Naive thymus-derived CD4-positive, alpha-beta T cell (primary cell): ENCODE measurements at regions of chr10 and their contacts with region 1.

Region 1: DNA sequence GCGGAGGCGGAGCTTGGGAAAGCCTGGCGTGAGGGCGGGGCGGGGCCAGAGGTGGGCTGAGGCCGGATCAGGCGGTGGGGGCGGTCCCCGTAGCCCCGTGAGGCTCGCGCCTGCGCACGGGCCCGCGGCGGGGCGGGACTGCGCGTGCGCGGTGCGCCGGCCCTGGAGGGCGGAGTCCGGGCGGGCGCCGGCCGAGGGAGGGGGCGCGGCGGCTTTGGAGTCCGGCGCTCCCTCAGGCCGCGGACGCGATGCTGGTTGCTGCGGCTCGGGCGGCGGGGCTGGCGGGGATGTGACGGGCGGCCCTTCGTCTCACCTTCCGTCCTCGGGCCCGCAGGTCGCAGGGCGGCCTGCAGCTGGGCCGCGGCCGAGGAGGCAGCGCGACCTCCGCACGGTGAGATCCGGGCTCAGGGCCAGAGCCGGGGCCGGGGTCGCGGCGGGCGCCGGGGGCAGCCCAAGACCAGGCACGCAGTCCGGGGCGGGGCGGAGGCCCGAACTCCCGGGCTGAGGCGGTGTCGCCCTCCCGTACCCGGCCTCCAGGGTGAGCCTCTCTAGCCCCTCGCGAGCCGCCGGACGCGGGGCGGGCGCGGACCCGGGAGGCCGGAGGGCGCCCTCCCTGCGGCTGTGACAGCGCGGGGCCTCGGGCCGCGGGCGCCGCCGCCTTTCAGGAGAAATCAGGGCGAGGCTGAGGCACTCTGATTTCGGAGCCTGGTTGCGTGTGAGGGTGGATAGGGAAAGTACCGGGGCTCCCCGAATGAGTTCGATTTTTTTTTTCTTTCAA is at the start of gene CCSER2:
- DNase-seq: peak; percentile 83 to 99 (median 88)
- ATAC-seq: peak; percentile 83
- H3K4me3 ChIP-seq: peak within 1 kb of the TSS; percentile 74
- H3K4me3 Mint-ChIP-seq: peak within 1 kb of the TSS; percentile 91 to 99 (median 94)
- H3K27ac ChIP-seq: peak within 1 kb of the TSS; percentile 100
- H3K27ac Mint-ChIP-seq: peak within 1 kb of the TSS; percentile 92 to 99 (median 97)
- H3K4me1 ChIP-seq: peaks cover 22 to 26% of the 10 kb centered on the region in 2 donors
- H3K4me1 Mint-ChIP-seq: peaks cover 21 to 40% (median 33%) of the 10 kb centered on the region in 7 donors
- H3K27me3 ChIP-seq: no peaks in the 10 kb centered on the region
- H3K27me3 Mint-ChIP-seq: peaks cover 0 to 22% (median 0%) of the 10 kb centered on the region in 5 donors
- total RNA-seq, gene CCSER2: 91.1 to 133 (median 114) TPM

Region 2: DNA sequence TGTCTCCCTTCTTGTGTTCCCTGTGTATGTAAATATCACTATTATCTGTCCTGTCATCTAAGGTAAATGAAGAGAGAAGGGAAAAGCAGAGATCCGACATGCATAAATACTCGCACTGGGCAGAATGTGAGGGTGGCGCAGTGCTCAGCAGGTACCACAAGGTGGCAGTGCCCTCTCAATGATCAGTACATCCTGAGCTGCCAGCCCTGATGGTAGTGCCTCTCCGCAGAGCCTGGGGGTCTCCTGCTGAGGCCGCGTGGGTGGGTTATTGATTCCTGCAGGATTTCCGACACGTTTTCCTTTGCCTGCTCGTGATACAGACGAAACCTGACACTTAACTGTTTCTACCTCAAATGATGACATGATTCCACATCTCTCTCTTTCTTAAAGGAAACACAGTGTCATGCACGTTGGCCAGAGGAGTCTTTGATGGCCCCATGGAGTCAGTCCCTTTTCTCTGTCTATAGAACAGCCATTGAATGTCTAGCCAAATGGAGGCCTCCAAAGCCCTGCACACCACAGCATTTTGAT is 63.9 kb before region 1 on chr10:
- CTCF ChIA-PET with region 1: no interaction called
- POLR2A ChIA-PET with region 1: no interaction called
- intact Hi-C with region 1: loop called (anchors 1 kb)
- DNase-seq: peak; percentile 37 to 74 (median 61)
- ATAC-seq: peak; percentile 94
- H3K4me3 ChIP-seq: no peak overlapping the region
- H3K4me3 Mint-ChIP-seq: no peak overlapping the region
- H3K27ac ChIP-seq: no peak overlapping the region
- H3K27ac Mint-ChIP-seq: no peak overlapping the region
- H3K4me1 ChIP-seq: peaks cover 0 to 3% of the 10 kb centered on the region in 2 donors
- H3K4me1 Mint-ChIP-seq: peaks cover 0 to 16% (median 7%) of the 10 kb centered on the region in 7 donors
- H3K27me3 ChIP-seq: no peaks in the 10 kb centered on the region
- H3K27me3 Mint-ChIP-seq: peaks cover 12 to 36% (median 25%) of the 10 kb centered on the region in 5 donors

Region 3: DNA sequence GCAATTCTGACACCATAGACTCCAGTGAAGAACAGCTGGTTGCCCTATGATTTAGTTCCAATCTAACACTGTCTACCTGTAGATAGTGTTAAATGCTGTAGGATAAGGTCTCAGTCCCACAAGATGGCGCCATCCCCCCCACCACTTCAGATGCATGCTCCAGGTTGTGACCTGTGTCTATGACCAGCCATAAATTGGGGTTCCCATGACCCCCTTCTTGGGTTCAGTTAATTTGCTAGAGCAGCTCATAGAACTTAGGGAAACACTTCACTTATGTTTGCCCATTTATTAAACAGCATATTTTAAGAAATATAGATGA is 12.9 kb after region 1 on chr10:
- CTCF ChIA-PET with region 1: interaction called, 4 read pairs
- POLR2A ChIA-PET with region 1: interaction called, 5 read pairs
- intact Hi-C with region 1: loop called (anchors 1 kb)
- DNase-seq: no peak
- ATAC-seq: peak; percentile 49
- H3K4me3 ChIP-seq: no peak overlapping the region
- H3K4me3 Mint-ChIP-seq: peak overlapping the region in 7 of 10 donors; percentile 5 to 71 (median 32)
- H3K27ac ChIP-seq: no peak overlapping the region
- H3K27ac Mint-ChIP-seq: peak overlapping the region in 6 of 9 donors; percentile 43 to 63 (median 52)
- H3K4me1 ChIP-seq: peaks cover 35 to 59% of the 10 kb centered on the region in 2 donors
- H3K4me1 Mint-ChIP-seq: peaks cover 50 to 64% (median 61%) of the 10 kb centered on the region in 7 donors
- H3K27me3 ChIP-seq: no peaks in the 10 kb centered on the region
- H3K27me3 Mint-ChIP-seq: no peaks in the 10 kb centered on the region

Region 4: DNA sequence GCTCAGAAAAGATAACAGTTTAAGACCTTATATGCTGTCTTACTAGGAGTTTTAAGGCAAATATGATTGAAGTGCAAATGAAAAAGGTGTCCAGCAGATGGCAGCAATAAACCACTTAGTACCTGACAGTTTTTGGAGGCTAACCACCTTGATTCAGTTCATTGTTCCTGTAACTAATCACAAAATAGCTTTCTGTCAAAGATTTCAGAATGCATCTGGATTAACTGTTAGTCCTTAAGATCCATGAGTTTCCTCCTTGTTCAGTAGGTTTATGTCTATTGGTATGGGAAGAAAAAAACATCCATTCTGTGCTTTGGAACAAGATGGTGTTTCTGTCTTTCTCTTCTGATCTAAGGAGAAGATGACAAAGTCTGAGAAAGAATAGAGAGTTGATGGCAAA is 46.4 kb after region 1 on chr10:
- CTCF ChIA-PET with region 1: no interaction called
- POLR2A ChIA-PET with region 1: no interaction called
- intact Hi-C with region 1: loop called (anchors 1 to 2 kb)
- DNase-seq: peak in 7 of 9 donors; percentile 34 to 68 (median 57)
- ATAC-seq: peak; percentile 70
- H3K4me3 ChIP-seq: no peak overlapping the region
- H3K4me3 Mint-ChIP-seq: peak overlapping the region in 1 of 10 donors; percentile 4
- H3K27ac ChIP-seq: no peak overlapping the region
- H3K27ac Mint-ChIP-seq: peak overlapping the region in 5 of 9 donors; percentile 18 to 79 (median 41)
- H3K4me1 ChIP-seq: peaks cover 0 to 5% of the 10 kb centered on the region in 2 donors
- H3K4me1 Mint-ChIP-seq: peaks cover 19 to 55% (median 37%) of the 10 kb centered on the region in 7 donors
- H3K27me3 ChIP-seq: no peaks in the 10 kb centered on the region
- H3K27me3 Mint-ChIP-seq: no peaks in the 10 kb centered on the region